T-cell (primary cell): ENCODE measurements at regions of chr19 and their contacts with region 1.

Region 1: DNA sequence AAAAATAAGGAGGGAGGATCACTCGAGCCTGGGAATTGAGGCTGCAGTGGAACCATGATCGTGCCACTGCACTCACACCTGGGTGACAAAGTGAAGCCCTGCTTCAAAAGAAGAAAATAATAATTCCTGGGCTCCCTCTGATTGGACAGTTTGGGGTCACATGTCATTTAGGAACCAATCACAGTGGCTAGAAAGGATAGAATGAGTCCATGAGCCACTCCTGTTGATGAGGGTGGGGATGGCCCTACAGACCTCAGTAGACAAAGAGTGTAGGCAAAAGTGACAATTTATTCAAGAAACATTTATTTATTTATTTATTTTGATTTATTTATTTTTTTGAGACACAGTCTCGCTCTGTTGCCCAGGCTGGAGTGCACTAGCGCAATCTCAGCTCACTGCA is 26.8 kb upstream of the ADGRE5 start:
- DNase-seq: no peak
- ATAC-seq: no peak
- H3K4me3 ChIP-seq: no peak overlapping the region
- H3K4me3 Mint-ChIP-seq: no peak overlapping the region
- H3K27ac ChIP-seq: peak overlapping the region; percentile 64
- H3K27ac Mint-ChIP-seq: peak overlapping the region; percentile 94 to 100
- H3K4me1 ChIP-seq: peaks cover 18 to 55% of the 10 kb centered on the region in 2 experiments
- H3K4me1 Mint-ChIP-seq: peaks cover 28 to 41% (median 38%) of the 10 kb centered on the region in 3 donors
- H3K27me3 ChIP-seq: no peaks in the 10 kb centered on the region
- H3K27me3 Mint-ChIP-seq: no peaks in the 10 kb centered on the region

Region 2: GRCh38 chr19:13758795-13759194 is 595.6 kb before region 1 on chr19:
- CTCF ChIA-PET with region 1: no interaction called
- POLR2A ChIA-PET with region 1: no interaction called
- DNase-seq: no peak
- ATAC-seq: no peak
- H3K4me3 ChIP-seq: no peak overlapping the region
- H3K4me3 Mint-ChIP-seq: no peak overlapping the region
- H3K27ac ChIP-seq: no peak overlapping the region
- H3K27ac Mint-ChIP-seq: no peak overlapping the region
- H3K4me1 ChIP-seq: peaks cover 0 to 8% of the 10 kb centered on the region in 2 experiments
- H3K4me1 Mint-ChIP-seq: peaks cover 0 to 6% (median 5%) of the 10 kb centered on the region in 3 donors
- H3K27me3 ChIP-seq: no peaks in the 10 kb centered on the region
- H3K27me3 Mint-ChIP-seq: no peaks in the 10 kb centered on the region

Region 3: DNA sequence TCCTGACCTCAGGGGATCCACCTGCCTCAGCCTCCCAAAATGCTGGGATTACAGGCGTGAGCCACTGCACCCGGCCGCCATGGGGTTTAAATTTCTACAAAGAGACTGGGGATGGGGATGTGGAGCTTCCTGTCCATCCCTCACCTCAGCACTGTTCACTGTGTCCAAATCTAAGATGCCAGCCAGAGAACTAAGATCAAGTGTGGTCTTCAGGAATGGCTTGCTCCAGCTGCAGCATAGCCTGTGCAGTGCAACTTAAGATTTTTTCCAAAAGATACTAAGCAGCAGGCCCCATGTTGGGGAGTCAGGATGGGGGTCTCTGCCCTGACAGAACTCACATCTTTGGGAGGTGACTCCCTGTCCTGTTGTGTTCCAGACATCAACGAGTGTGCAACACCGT is 36.1 kb after region 1 on chr19:
- CTCF ChIA-PET with region 1: no interaction called
- POLR2A ChIA-PET with region 1: interaction called, 9 to 15 read pairs
- DNase-seq: no peak
- ATAC-seq: no peak
- H3K4me3 ChIP-seq: no peak overlapping the region
- H3K4me3 Mint-ChIP-seq: peak overlapping the region in 1 of 3 donors; percentile 2
- H3K27ac ChIP-seq: no peak overlapping the region
- H3K27ac Mint-ChIP-seq: peak overlapping the region in 1 of 2 donors; percentile 28
- H3K4me1 ChIP-seq: peaks cover under 1 to 35% of the 10 kb centered on the region in 2 experiments
- H3K4me1 Mint-ChIP-seq: peaks cover 10 to 33% (median 20%) of the 10 kb centered on the region in 3 donors
- H3K27me3 ChIP-seq: no peaks in the 10 kb centered on the region
- H3K27me3 Mint-ChIP-seq: no peaks in the 10 kb centered on the region

Region 4: GRCh38 chr19:14432791-14433553 is 78.5 kb after region 1 on chr19 and contains the start of gene PKN1:
- CTCF ChIA-PET with region 1: no interaction called
- POLR2A ChIA-PET with region 1: interaction called, 3 to 12 read pairs
- DNase-seq: peak in 8 of 35 experiments; percentile 29 to 60 (median 38)
- ATAC-seq: peak; percentile 38 to 47 (median 44)
- H3K4me3 ChIP-seq: peak within 1 kb of the TSS; percentile 46 to 86
- H3K4me3 Mint-ChIP-seq: peak within 1 kb of the TSS; percentile 83 to 88 (median 87)
- H3K27ac ChIP-seq: peak within 1 kb of the TSS; percentile 83
- H3K27ac Mint-ChIP-seq: peak within 1 kb of the TSS; percentile 92 to 94
- H3K4me1 ChIP-seq: peaks cover 7 to 48% of the 10 kb centered on the region in 2 experiments
- H3K4me1 Mint-ChIP-seq: peaks cover 39 to 49% (median 42%) of the 10 kb centered on the region in 3 donors
- H3K27me3 ChIP-seq: peaks cover 0 to 9% of the 10 kb centered on the region in 2 experiments
- H3K27me3 Mint-ChIP-seq: no peaks in the 10 kb centered on the region
- total RNA-seq, gene PKN1: 170 to 272 (median 224) TPM

Region 5: GRCh38 chr19:14472202-14472938 is 117.9 kb after region 1 on chr19:
- CTCF ChIA-PET with region 1: no interaction called
- POLR2A ChIA-PET with region 1: no interaction called
- DNase-seq: peak; percentile 46 to 90 (median 81)
- ATAC-seq: peak; percentile 74 to 82 (median 76)
- H3K4me3 ChIP-seq: peak overlapping the region; percentile 18 to 60
- H3K4me3 Mint-ChIP-seq: peak overlapping the region; percentile 13 to 77 (median 36)
- H3K27ac ChIP-seq: no peak overlapping the region
- H3K27ac Mint-ChIP-seq: no peak overlapping the region
- H3K4me1 ChIP-seq: peaks cover 3 to 52% of the 10 kb centered on the region in 2 experiments
- H3K4me1 Mint-ChIP-seq: peaks cover 28 to 39% (median 29%) of the 10 kb centered on the region in 3 donors
- H3K27me3 ChIP-seq: peaks cover 0 to 43% of the 10 kb centered on the region in 2 experiments
- H3K27me3 Mint-ChIP-seq: peaks cover 14 to 20% of the 10 kb centered on the region in 2 donors